A673 (cell line): ENCODE measurements at regions of chr19 and their contacts with region 1.

Region 1: GRCh38 chr19:52189735-52190486 is at the start of gene PPP2R1A:
- DNase-seq: peak; percentile 100
- H3K4me3 ChIP-seq: peak within 1 kb of the TSS; percentile 68
- H3K27ac ChIP-seq: peak within 1 kb of the TSS; percentile 97
- H3K4me1 ChIP-seq: peaks cover 8% of the 10 kb centered on the region
- H3K27me3 ChIP-seq: no peaks in the 10 kb centered on the region
- CTCF ChIP-seq: no peak
- total RNA-seq, gene PPP2R1A: 316 and 324 TPM in 2 replicates

Region 2: DNA sequence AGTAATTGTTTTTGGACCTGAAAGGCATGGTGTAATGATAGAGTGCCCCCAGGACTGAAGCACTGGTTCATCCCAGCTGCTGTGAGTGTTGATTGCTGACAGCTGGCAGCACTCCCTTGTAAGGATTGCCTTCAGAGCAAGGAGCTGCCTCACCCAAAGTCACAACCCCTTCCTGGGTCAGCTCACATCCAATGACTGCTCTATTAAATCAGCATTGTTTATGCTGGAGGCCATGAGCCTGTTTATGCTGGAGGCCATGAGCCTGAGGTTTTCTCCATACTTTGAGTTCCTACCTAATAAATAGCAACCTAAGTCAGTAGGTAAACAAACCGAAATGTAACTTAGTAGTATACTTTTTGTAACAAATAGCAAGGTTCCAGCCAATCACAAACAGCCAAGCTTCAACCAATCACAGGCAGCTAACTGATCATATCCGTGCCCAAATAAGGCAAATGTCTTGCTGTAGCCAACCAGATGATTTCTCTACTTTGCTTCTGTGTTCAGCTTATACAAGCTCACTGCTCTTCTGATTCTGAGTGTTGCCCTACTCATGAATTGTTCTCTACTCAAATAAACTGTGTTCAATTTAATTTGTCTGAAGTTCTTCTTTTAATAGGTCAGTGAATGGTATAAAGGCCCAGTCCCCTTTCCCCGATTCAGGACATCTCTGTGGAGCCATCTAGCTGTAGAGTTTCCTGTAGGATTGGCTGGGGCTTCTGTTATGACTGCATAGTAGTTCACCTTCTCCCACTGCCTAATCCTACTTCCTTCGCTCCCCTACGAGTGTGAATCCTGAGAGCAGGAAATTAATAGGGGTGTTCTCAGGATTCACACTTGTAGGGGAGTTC is 508.4 kb before region 1 on chr19:
- CTCF ChIA-PET with region 1: no interaction called
- POLR2A ChIA-PET with region 1: no interaction called
- intact Hi-C with region 1: no loop called
- DNase-seq: peak; percentile 80
- H3K4me3 ChIP-seq: no peak overlapping the region
- H3K27ac ChIP-seq: peak overlapping the region; percentile 61
- H3K4me1 ChIP-seq: peaks cover 6% of the 10 kb centered on the region
- H3K27me3 ChIP-seq: peaks cover 17% of the 10 kb centered on the region
- CTCF ChIP-seq: no peak

Region 3: DNA sequence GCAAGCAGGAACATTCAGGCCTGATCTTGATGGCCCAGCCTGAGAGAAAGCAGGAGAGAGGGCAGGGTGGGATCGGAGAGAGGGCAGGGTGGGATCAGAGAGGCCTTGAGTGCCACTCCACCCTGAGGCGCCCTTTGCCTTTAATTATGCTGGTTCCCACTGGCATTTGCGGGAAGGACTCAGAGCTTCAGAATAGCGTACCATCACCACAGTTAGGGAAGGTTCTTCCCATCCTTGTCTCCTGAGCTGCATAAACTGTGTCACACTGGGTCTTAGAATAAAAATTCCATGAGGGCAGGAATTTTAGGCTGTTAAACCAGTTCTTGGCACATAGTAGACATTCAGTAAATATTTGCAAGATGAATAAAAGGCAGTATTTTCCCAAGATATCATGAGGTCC is 24.3 kb after region 1 on chr19:
- CTCF ChIA-PET with region 1: no interaction called
- POLR2A ChIA-PET with region 1: no interaction called
- intact Hi-C with region 1: no loop called
- DNase-seq: no peak
- H3K4me3 ChIP-seq: no peak overlapping the region
- H3K27ac ChIP-seq: no peak overlapping the region
- H3K4me1 ChIP-seq: no peaks in the 10 kb centered on the region
- H3K27me3 ChIP-seq: no peaks in the 10 kb centered on the region
- CTCF ChIP-seq: no peak

Region 4: GRCh38 chr19:52258426-52258825 is 68.5 kb after region 1 on chr19:
- CTCF ChIA-PET with region 1: interaction called, 19 read pairs
- POLR2A ChIA-PET with region 1: no interaction called
- intact Hi-C with region 1: no loop called
- DNase-seq: no peak
- H3K4me3 ChIP-seq: no peak overlapping the region
- H3K27ac ChIP-seq: no peak overlapping the region
- H3K4me1 ChIP-seq: no peaks in the 10 kb centered on the region
- H3K27me3 ChIP-seq: no peaks in the 10 kb centered on the region
- CTCF ChIP-seq: no peak

Region 5: GRCh38 chr19:52336117-52336790 is 146.3 kb after region 1 on chr19 and contains the start of gene ZNF610:
- CTCF ChIA-PET with region 1: no interaction called
- POLR2A ChIA-PET with region 1: interaction called, 15 read pairs
- intact Hi-C with region 1: no loop called
- DNase-seq: peak; percentile 87
- H3K4me3 ChIP-seq: peak within 1 kb of the TSS; percentile 82
- H3K27ac ChIP-seq: peak within 1 kb of the TSS; percentile 90
- H3K4me1 ChIP-seq: no peaks in the 10 kb centered on the region
- H3K27me3 ChIP-seq: no peaks in the 10 kb centered on the region
- CTCF ChIP-seq: no peak
- total RNA-seq, gene ZNF610: 2.3 and 3.4 TPM in 2 replicates

Region 6: GRCh38 chr19:52535771-52536447 is 346.0 kb after region 1 on chr19:
- CTCF ChIA-PET with region 1: no interaction called
- POLR2A ChIA-PET with region 1: no interaction called
- intact Hi-C with region 1: no loop called
- DNase-seq: peak; percentile 91
- H3K4me3 ChIP-seq: peak overlapping the region; percentile 49
- H3K27ac ChIP-seq: peak overlapping the region; percentile 45
- H3K4me1 ChIP-seq: no peaks in the 10 kb centered on the region
- H3K27me3 ChIP-seq: no peaks in the 10 kb centered on the region
- CTCF ChIP-seq: no peak